Mucosa of descending colon (tissue), 3 donors: ENCODE measurements at regions of chr17 and their contacts with region 1.

Region 1: GRCh38 chr17:29549177-29549923 is 17.5 kb downstream of the ABHD15 start:
- DNase-seq: no peak
- ATAC-seq: no peak
- H3K4me3 ChIP-seq: no peak overlapping the region
- H3K4me1 ChIP-seq: no peaks in the 10 kb centered on the region
- CTCF ChIP-seq: no peak

Region 2: DNA sequence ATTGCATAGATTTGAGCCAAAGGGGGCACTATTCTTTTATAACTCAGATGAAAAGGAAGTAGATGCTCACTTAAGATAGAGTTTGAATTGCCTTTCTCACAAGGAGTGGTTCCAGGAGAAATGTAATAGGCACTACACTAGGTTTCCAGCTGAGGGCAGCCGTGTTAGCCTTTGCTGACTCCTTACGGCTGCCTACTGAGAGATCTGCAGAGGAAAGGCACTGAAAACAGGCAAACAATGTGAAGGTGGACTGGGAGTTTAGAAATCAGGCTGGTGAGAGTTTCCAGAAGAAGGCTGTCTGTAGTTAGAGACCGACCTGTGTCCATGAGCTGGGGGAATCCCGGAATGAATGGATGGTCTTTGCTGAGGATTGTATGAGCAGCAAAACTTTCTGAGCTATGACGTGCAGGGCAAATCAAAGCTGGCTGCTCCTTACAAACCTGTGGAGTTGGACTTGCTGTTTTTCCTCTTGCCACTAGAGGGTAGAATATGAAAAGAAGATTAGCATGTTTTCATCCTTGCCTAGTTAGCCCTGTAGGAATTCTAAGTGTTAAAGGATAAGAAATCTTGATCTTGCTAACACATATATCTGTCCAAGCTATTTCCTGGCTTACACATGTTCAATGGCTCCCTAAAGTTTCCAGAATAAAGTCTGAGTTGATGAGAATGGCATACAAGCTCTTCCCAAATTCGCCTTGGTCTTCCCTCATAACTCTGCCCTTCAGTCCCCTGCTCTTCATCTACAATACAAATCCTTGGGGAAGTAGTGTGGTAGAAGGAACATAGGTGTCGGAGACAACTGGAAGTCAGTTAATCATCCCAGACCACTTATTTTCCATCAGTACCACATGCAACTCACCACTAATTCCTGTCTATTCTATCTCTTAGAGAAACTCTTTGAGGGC is 179.3 kb before region 1 on chr17:
- intact Hi-C with region 1: loop called in 1 of 2 experiments (anchors 10 kb)
- DNase-seq: peak in 2 of 3 donors; percentile 56 to 70
- ATAC-seq: peak; percentile 97
- H3K4me3 ChIP-seq: no peak overlapping the region
- H3K4me1 ChIP-seq: no peaks in the 10 kb centered on the region
- CTCF ChIP-seq: peak; percentile 37

Region 3: GRCh38 chr17:29458066-29458465 is 91.3 kb before region 1 on chr17:
- intact Hi-C with region 1: no loop called
- DNase-seq: no peak
- ATAC-seq: no peak
- H3K4me3 ChIP-seq: no peak overlapping the region
- H3K4me1 ChIP-seq: no peaks in the 10 kb centered on the region
- CTCF ChIP-seq: no peak

Region 4: DNA sequence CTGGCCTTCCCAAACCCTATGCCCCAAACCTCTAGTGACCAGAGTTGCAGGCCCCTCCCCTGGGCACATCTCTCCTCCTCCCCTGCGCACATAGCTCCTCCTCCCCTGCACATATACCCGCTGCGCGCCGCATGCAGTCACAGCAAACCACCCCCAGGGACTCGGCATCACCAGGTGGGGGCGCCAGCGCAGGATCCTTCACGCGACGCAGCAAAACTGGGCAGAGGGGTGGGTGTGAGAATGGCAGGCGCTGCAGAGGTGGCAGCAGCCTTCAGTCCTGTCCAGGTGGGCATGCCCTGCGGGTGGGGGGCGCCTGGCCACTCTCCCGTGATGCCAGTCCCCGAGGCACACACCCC is 67.8 kb after region 1 on chr17:
- intact Hi-C with region 1: no loop called
- DNase-seq: peak; percentile 86 to 93 (median 88)
- ATAC-seq: peak; percentile 75
- H3K4me3 ChIP-seq: no peak overlapping the region
- H3K4me1 ChIP-seq: peaks cover 49% of the 10 kb centered on the region
- CTCF ChIP-seq: peak; percentile 62